HEK293T (cell line): ENCODE measurements at regions of chr11 and their contacts with region 1.

Region 1: DNA sequence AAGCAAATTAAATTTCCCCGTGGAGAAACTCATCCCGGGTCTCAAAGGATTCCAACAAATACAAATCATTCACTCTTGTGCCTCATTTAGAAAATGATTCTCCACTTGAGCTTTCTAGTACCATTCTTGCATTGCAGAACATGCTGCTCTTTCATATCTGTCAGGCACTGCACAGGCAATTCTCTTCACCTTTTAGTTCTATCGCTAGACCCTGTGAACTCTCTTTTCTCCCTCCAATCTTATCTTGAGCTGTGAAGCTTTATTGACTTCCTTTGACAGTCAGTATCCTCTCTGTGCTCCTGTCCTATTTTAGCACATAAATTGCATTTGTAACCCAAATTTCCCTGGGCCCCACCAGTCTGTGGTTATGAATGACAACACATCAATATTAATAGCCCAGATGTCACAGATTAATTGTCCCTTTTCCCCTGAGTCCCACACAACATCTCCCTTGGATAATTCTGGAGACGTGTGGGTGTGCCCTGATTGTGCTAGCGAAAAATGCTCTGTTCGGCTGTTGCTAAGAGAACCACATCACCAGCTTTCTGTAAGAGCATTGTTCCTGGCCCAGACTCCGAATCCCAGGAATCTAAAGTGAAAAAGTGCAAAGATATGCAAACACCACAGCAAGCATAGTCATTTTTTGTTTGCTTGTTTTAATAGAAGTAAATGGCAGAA is 22.4 kb upstream of the SC5D start:
- DNase-seq: no peak

Region 2: DNA sequence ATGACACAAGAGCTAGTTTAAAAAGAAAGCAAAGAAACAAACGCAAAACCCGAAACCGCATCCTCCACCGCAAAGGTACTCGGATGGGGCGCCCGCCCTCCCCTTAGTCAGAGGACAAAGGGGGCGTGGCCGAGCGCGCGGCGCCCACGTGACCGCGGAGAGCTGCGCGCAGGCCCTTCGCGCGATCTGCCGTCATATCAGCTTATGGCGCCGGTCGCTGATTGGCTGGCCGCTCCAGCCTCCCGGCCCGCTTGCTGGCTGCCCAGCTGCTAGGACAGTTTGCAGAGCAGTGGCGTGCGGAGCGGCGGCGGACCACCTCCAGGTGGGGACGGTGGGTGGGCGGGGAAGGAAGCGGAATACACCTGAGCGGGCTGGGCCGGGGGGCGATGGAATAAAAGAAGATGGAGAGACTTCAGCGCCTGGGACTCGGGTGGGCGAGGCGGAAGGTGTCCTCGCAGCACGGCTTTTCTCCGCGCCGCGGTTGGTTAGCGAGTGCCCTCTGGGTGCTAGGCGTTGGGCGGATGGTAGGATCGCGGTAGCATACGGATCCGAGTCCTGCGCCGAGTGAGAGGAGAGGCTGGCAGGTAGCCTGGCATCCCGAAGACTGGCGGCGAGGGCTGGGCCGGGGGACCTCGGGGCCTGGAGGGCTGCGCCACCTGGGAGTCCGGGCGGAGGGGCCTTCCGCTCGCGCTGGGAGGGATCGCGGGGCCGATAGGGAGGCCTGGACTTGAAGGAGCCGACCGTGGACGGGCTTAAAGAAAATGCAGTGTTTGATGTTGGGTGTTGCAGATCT is 22.6 kb after region 1 on chr11 and contains the start of gene SC5D:
- CTCF ChIA-PET with region 1: no interaction called
- POLR2A ChIA-PET with region 1: interaction called, 14 read pairs
- DNase-seq: peak; percentile 95